K562 (cell line): ENCODE measurements at regions of chr11 and their contacts with region 1.

Region 1: GRCh38 chr11:86486261-86487028 is 111.8 kb downstream of the CCDC81 start:
- DNase-seq: no peak
- ATAC-seq: no peak
- H3K4me3 ChIP-seq: no peak overlapping the region
- H3K27ac ChIP-seq: no peak overlapping the region
- H3K4me1 ChIP-seq: peaks cover 0 to 10% of the 10 kb centered on the region in 2 experiments; a peak in 3 of 5 replicates
- H3K27me3 ChIP-seq: no peaks in the 10 kb centered on the region
- CTCF ChIP-seq: no peak
- EP300 ChIP-seq: no peak
- POLR2A ChIP-seq: no peak
- RAD21 ChIP-seq: no peak

Region 2: GRCh38 chr11:86089659-86090058 is 396.8 kb before region 1 on chr11:
- CTCF ChIA-PET with region 1: no interaction called
- POLR2A ChIA-PET with region 1: no interaction called
- in situ Hi-C with region 1: no loop called
- intact Hi-C with region 1: no loop called
- DNase-seq: no peak
- ATAC-seq: no peak
- H3K4me3 ChIP-seq: no peak overlapping the region
- H3K27ac ChIP-seq: no peak overlapping the region
- H3K4me1 ChIP-seq: peaks cover 6 to 7% of the 10 kb centered on the region in 2 experiments; a peak in 3 of 5 replicates
- H3K27me3 ChIP-seq: no peaks in the 10 kb centered on the region
- CTCF ChIP-seq: no peak
- EP300 ChIP-seq: no peak
- POLR2A ChIP-seq: no peak
- RAD21 ChIP-seq: no peak

Region 3: DNA sequence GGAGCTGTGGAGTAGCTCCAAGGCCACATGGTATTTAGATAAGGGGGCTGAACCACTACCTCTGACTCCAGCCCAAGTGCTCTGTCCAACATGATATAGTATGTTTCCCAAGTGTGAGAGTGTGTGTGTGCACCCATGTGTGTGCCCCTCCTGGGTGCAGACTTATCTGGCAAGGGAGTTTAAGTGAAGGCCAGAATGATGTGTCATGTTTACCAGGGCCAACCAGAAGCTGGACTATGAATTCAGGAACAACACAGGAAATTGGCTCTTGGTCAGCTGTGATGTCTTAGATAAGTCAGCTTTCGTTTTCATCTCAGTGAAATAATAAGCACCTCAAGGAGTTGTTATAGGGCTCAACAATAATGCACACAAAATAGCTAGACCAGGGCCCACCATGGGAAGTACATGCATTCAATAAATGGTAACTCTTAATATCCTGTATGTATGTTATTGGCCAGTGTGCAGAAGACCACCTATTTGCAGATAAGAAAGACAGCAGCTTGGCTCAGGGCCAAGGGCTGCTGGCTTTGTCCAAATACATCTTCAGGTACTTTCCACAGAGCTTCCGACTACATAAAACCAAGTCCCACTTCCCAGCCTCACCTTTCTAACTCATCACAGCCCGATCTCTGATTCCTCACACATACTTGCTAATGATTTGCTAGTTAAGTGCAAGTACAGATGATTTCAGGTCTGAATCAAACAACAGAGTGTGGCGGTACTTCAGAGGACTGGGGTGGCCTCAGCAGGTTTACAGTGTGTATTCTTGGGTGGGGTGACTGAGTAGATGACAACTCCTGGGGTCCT is 65.0 kb after region 1 on chr11:
- CTCF ChIA-PET with region 1: no interaction called
- POLR2A ChIA-PET with region 1: no interaction called
- in situ Hi-C with region 1: no loop called
- intact Hi-C with region 1: no loop called
- DNase-seq: peak in 2 of 4 experiments; percentile 16 to 20
- ATAC-seq: peak; percentile 46
- H3K4me3 ChIP-seq: no peak overlapping the region
- H3K27ac ChIP-seq: no peak overlapping the region
- H3K4me1 ChIP-seq: peaks cover 0 to 10% of the 10 kb centered on the region in 2 experiments; a peak in 3 of 5 replicates
- H3K27me3 ChIP-seq: peaks cover 13 to 45% of the 10 kb centered on the region in 2 experiments
- CTCF ChIP-seq: no peak
- EP300 ChIP-seq: no peak
- POLR2A ChIP-seq: no peak
- RAD21 ChIP-seq: 0 out of 4 replicates have a peak, but pooled peaks of 1 of the 2 experiments have one; percentile 8

Region 4: GRCh38 chr11:86571273-86571948 is 85.0 kb after region 1 on chr11:
- CTCF ChIA-PET with region 1: interaction called, 4 read pairs
- POLR2A ChIA-PET with region 1: no interaction called
- in situ Hi-C with region 1: no loop called
- intact Hi-C with region 1: loop called (anchors 1 kb)
- DNase-seq: peak; percentile 63 to 74 (median 69)
- ATAC-seq: peak; percentile 99
- H3K4me3 ChIP-seq: no peak overlapping the region
- H3K27ac ChIP-seq: no peak overlapping the region
- H3K4me1 ChIP-seq: no peaks in the 10 kb centered on the region
- H3K27me3 ChIP-seq: peaks cover 11 to 37% of the 10 kb centered on the region in 2 experiments; a peak in 4 of 5 replicates
- CTCF ChIP-seq: peak; percentile 81 to 98 (median 85)
- EP300 ChIP-seq: no peak
- POLR2A ChIP-seq: no peak
- RAD21 ChIP-seq: peak; percentile 59 to 87